Sigmoid colon (tissue), 7 donors: ENCODE measurements at regions of chr1 and their contacts with region 1.

Region 1: GRCh38 chr1:205255941-205256780 is 28.4 kb downstream of the TMCC2 start:
- DNase-seq: peak; percentile 95
- H3K4me3 ChIP-seq: no peak overlapping the region
- H3K27ac ChIP-seq: peak overlapping the region in 1 of 4 donors; percentile 46
- H3K4me1 ChIP-seq: peaks cover 0 to 41% (median 16%) of the 10 kb centered on the region in 4 donors
- H3K27me3 ChIP-seq: no peaks in the 10 kb centered on the region
- CTCF ChIP-seq: peak; percentile 96 to 99 (median 98)
- EP300 ChIP-seq: no peak
- POLR2A ChIP-seq: no peak

Region 2: DNA sequence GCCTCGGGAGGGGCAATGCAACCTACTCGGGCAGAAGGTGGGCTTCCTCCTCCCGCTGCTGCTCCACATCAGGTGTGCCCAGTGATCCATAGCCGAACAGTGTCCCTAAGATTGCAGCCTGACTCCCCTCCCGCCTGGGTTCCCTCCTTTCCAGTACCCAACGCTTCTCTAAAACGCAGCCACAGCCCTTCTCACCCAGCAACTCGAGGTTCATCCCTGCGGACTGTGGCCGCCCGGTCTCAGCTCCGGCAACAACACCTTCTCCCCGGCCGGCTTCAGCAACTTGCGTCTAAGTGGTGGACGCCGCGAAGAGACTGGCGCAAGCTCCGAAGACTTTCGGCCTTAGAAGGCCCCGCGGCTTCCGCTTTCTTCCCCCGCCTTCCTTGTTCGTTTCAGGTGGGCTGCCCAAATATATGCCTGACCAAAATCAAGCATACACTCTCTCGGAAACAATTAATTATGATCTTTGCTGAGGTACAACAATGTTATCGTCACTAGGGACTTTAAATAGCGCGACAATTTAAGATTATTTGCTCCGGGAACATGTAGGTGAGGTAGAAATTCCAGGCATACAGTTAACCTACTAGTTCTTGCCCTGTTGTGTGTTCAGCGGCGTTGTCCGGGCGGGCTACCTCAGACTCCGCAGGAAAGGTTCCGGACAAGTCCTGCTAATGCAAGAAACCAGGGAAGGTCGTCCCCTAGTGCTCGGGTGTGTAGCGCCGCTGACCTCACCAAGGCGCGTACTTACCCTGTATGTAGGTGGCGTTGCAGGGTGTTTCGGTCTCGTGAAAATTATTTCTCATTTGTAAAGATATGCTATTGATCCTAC is 134.3 kb before region 1 on chr1 and contains the start of gene RBBP5:
- intact Hi-C with region 1: loop called (anchors 5 kb)
- DNase-seq: peak; percentile 97
- H3K4me3 ChIP-seq: peak within 1 kb of the TSS; percentile 80 to 95 (median 90)
- H3K27ac ChIP-seq: peak within 1 kb of the TSS; percentile 88 to 93 (median 91)
- H3K4me1 ChIP-seq: peaks cover 0 to 31% (median 23%) of the 10 kb centered on the region in 4 donors
- H3K27me3 ChIP-seq: no peaks in the 10 kb centered on the region
- CTCF ChIP-seq: peak; percentile 49 to 68 (median 56)
- EP300 ChIP-seq: no peak
- POLR2A ChIP-seq: peak; percentile 69 to 73
- total RNA-seq, gene RBBP5: 12.2 to 36.5 (median 13.9) TPM

Region 3: GRCh38 chr1:205141236-205142101 is 114.7 kb before region 1 on chr1:
- intact Hi-C with region 1: loop called (anchors 5 kb)
- DNase-seq: peak; percentile 82
- H3K4me3 ChIP-seq: peak overlapping the region in 1 of 4 donors; percentile 11
- H3K27ac ChIP-seq: peak overlapping the region in 1 of 4 donors; percentile 3
- H3K4me1 ChIP-seq: peaks cover 0 to 33% (median 22%) of the 10 kb centered on the region in 4 donors
- H3K27me3 ChIP-seq: no peaks in the 10 kb centered on the region
- CTCF ChIP-seq: peak; percentile 34 to 83 (median 77)
- EP300 ChIP-seq: no peak
- POLR2A ChIP-seq: no peak

Region 4: GRCh38 chr1:205227584-205228006 is 28.6 kb before region 1 on chr1 and contains the start of gene TMCC2:
- intact Hi-C with region 1: loop called (anchors 1 kb)
- DNase-seq: peak; percentile 96
- H3K4me3 ChIP-seq: peak within 1 kb of the TSS; percentile 52 to 71 (median 63)
- H3K27ac ChIP-seq: peak within 1 kb of the TSS; percentile 40 to 68 (median 64)
- H3K4me1 ChIP-seq: peaks cover 0 to 31% (median 28%) of the 10 kb centered on the region in 4 donors
- H3K27me3 ChIP-seq: no peaks in the 10 kb centered on the region
- CTCF ChIP-seq: no peak
- EP300 ChIP-seq: no peak
- POLR2A ChIP-seq: no peak
- total RNA-seq, gene TMCC2: 4.3 to 6.4 (median 5.6) TPM